ENCODE measurements at regions of chr1 and their contacts with region 1.

Region 1: DNA sequence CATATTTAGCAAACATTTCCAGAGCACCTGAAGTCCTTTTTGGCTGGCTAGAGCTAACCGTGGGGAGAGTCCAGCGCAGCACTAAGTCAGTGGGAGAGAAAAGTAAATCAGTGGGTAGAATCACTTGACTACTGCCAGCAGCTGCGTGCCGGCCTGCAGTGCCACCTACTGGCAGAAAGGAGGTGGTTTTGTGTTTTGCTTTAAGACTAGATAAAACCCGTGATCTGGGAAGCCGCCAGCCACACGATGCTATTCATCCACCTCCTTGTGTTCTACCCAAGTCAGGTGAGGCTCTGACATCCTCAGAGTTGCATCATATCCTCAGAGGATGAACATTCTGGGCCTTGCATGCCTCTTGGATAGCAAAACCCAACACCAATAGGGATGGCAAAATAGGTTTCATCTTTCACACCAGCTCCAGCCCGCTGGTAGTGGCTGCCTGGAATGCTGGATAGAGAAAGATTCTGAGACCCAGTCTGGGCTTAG is 14.1 kb upstream of the HEYL start:
- DNase-seq: peak; percentile 84
- ATAC-seq: peak; percentile 77
- H3K4me3 Mint-ChIP-seq: no peak overlapping the region
- H3K27ac Mint-ChIP-seq: no peak overlapping the region
- H3K4me1 Mint-ChIP-seq: peaks cover 15% of the 10 kb centered on the region
- H3K27me3 Mint-ChIP-seq: peaks cover 8% of the 10 kb centered on the region

Region 2: DNA sequence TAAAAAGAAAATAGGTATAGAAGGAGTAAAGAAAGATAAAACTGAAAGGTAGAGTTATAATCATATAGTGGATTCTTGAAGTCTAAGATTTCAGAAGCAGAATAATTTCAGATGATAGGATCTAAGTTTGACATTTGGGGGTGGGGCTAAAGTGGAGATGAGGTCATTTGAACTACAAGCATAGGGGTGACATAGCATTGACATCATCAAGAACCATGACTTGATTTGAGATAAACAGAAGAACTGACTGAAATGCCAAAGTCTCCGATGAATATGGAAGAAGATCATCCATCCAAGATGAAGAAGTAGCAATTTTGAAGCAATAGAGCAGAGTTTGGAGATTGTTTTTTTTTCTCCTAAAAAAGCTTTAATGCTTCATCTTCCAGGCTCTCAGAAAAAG is 326.8 kb before region 1 on chr1:
- CTCF ChIA-PET with region 1: no interaction called
- POLR2A ChIA-PET with region 1: no interaction called
- DNase-seq: no peak
- ATAC-seq: no peak
- H3K4me3 Mint-ChIP-seq: no peak overlapping the region
- H3K27ac Mint-ChIP-seq: peak overlapping the region; percentile 0
- H3K4me1 Mint-ChIP-seq: peaks cover 22% of the 10 kb centered on the region
- H3K27me3 Mint-ChIP-seq: no peaks in the 10 kb centered on the region

Region 3: DNA sequence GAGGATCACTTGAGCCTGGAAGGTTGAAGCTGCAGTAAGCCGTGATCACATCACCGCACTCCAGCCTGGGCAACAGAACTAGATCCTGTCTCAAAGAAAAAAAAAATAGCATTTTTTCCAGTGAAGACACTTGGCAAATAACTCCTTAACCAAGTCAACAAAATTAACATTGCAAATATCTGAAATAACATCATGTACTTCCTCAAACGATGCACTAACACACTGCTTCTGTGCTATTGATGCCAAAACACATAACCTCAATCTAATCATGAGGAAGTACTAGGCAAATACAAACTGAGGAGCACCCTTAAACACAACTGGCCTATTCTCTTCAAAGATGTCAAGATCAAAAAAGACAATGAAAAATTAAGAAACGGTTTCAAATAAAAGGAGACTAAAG is 109.3 kb before region 1 on chr1:
- CTCF ChIA-PET with region 1: no interaction called
- POLR2A ChIA-PET with region 1: no interaction called
- DNase-seq: no peak
- ATAC-seq: no peak
- H3K4me3 Mint-ChIP-seq: no peak overlapping the region
- H3K27ac Mint-ChIP-seq: no peak overlapping the region
- H3K4me1 Mint-ChIP-seq: no peaks in the 10 kb centered on the region
- H3K27me3 Mint-ChIP-seq: no peaks in the 10 kb centered on the region

Region 4: DNA sequence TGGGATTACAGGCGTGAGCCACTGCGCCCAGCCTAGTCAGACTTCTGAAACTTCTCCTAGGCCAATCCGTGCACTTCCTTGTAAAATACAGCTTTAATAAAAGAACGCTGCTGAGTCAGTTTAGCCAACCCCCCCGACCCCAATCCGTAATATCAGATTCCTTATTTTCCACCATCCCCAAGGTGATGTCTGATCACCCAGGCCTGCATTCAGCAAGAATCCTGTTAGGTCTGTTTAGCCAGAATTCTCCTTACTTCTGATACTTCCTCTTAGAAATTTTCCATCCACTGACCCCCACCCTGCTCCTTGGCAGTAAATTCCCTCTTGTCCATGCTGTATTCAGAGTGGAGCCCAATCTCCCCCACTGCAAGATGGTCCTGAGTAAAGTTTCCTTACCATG is 65.5 kb before region 1 on chr1:
- CTCF ChIA-PET with region 1: interaction called, 11 read pairs
- POLR2A ChIA-PET with region 1: no interaction called
- DNase-seq: no peak
- ATAC-seq: no peak
- H3K4me3 Mint-ChIP-seq: no peak overlapping the region
- H3K27ac Mint-ChIP-seq: no peak overlapping the region
- H3K4me1 Mint-ChIP-seq: peaks cover 2% of the 10 kb centered on the region
- H3K27me3 Mint-ChIP-seq: peaks cover 2% of the 10 kb centered on the region

Region 5: DNA sequence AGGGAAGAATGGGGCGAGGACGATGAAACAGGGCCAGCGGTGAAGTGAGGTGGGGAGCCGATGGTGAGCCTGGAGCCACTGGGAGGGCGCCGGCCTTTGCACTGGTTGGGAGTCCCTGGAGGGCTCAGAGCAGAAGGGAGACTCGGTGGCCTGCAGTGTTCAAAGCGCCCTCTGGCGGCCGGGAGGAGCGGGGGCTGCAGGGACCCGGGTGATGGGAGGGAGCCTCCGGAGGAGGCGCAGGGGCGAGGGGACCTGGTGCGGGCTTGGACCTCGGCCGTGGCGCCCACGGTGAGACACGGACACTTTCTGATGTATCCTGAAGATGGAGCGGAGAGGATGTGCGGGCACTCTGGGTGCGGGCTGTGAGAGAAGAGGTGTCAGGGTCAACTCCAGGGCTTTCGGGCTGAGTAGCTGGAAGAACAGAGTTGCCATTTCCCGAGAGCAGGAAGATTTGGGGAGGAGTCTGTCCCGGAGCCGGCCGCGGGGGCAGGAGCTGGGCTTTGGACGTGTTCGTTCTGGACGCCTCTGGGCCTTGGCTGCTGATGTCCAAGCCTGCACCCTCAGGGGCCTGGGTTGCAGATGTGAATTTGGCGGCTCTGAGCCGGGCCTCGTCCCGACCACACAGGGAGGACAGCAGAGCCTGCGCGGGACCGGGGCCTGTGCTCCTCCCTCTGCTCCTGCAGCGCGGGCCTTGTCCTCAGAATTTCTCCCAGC is 43.8 kb before region 1 on chr1:
- CTCF ChIA-PET with region 1: interaction called, 295 read pairs
- POLR2A ChIA-PET with region 1: interaction called, 3 read pairs
- DNase-seq: peak; percentile 72
- ATAC-seq: peak; percentile 90
- H3K4me3 Mint-ChIP-seq: no peak overlapping the region
- H3K27ac Mint-ChIP-seq: no peak overlapping the region
- H3K4me1 Mint-ChIP-seq: peaks cover 8% of the 10 kb centered on the region
- H3K27me3 Mint-ChIP-seq: peaks cover 12% of the 10 kb centered on the region

Region 6: GRCh38 chr1:39672551-39672947 is 19.0 kb after region 1 on chr1:
- CTCF ChIA-PET with region 1: interaction called, 230 read pairs
- POLR2A ChIA-PET with region 1: no interaction called
- DNase-seq: peak; percentile 35
- ATAC-seq: peak; percentile 23
- H3K4me3 Mint-ChIP-seq: peak overlapping the region; percentile 34
- H3K27ac Mint-ChIP-seq: no peak overlapping the region
- H3K4me1 Mint-ChIP-seq: peaks cover 11% of the 10 kb centered on the region
- H3K27me3 Mint-ChIP-seq: peaks cover 33% of the 10 kb centered on the region

Region 7: GRCh38 chr1:39691262-39692151 is 37.9 kb after region 1 on chr1 and contains the start of gene HPCAL4:
- CTCF ChIA-PET with region 1: interaction called, 14 read pairs
- POLR2A ChIA-PET with region 1: no interaction called
- DNase-seq: peak; percentile 93
- ATAC-seq: peak; percentile 98
- H3K4me3 Mint-ChIP-seq: peak within 1 kb of the TSS; percentile 74
- H3K27ac Mint-ChIP-seq: peak within 1 kb of the TSS; percentile 49
- H3K4me1 Mint-ChIP-seq: peaks cover 22% of the 10 kb centered on the region
- H3K27me3 Mint-ChIP-seq: peaks cover 57% of the 10 kb centered on the region
- total RNA-seq, gene HPCAL4: 0.47 to 0.55 TPM

Region 8: DNA sequence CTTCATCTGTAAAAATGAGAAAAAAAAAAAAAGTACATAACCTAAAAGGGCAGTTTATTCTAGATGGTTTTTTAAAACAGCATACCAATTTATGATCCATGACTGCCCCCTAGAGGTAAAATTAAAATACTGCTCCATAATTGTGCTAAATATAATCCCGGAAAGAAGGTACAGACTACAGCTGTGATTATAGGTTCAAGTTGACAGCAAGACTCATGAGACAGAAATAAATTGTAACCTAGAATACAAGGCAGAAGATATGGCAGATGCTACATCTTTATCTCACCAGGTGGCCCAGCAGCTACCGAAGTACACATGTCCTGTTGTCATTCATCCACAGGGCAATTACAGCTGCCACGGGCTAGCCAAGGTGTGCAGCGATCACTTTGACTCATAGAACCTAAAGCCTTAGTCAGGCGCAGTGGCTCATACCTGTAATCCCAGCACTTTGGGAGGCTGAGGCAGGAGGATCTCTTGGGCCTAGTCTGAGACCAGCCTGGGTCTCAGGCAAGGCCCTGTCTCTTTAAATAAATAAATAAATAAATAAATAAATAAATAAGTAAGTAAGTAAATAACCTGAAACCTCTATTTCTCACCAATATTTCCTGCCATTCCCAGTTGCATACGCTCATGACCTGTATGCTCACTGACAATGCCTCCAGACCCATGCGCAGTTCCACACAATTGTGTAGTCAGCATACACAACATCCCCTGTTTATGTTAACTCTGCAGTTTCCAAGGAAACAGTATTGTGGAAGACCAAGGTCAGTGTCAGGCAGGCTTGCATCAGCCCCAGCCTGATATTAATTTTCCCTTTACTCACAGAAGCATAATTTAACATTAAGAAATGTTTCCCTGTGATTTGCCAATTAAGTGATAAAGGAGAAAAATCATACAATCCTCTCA is 66.8 kb after region 1 on chr1:
- CTCF ChIA-PET with region 1: interaction called, 20 read pairs
- POLR2A ChIA-PET with region 1: no interaction called
- DNase-seq: no peak
- ATAC-seq: peak; percentile 67
- H3K4me3 Mint-ChIP-seq: no peak overlapping the region
- H3K27ac Mint-ChIP-seq: no peak overlapping the region
- H3K4me1 Mint-ChIP-seq: no peaks in the 10 kb centered on the region
- H3K27me3 Mint-ChIP-seq: peaks cover 53% of the 10 kb centered on the region

Region 9: GRCh38 chr1:39835110-39835509 is 181.5 kb after region 1 on chr1:
- CTCF ChIA-PET with region 1: no interaction called
- POLR2A ChIA-PET with region 1: no interaction called
- DNase-seq: no peak
- ATAC-seq: no peak
- H3K4me3 Mint-ChIP-seq: no peak overlapping the region
- H3K27ac Mint-ChIP-seq: no peak overlapping the region
- H3K4me1 Mint-ChIP-seq: no peaks in the 10 kb centered on the region
- H3K27me3 Mint-ChIP-seq: peaks cover 4% of the 10 kb centered on the region

Region 10: DNA sequence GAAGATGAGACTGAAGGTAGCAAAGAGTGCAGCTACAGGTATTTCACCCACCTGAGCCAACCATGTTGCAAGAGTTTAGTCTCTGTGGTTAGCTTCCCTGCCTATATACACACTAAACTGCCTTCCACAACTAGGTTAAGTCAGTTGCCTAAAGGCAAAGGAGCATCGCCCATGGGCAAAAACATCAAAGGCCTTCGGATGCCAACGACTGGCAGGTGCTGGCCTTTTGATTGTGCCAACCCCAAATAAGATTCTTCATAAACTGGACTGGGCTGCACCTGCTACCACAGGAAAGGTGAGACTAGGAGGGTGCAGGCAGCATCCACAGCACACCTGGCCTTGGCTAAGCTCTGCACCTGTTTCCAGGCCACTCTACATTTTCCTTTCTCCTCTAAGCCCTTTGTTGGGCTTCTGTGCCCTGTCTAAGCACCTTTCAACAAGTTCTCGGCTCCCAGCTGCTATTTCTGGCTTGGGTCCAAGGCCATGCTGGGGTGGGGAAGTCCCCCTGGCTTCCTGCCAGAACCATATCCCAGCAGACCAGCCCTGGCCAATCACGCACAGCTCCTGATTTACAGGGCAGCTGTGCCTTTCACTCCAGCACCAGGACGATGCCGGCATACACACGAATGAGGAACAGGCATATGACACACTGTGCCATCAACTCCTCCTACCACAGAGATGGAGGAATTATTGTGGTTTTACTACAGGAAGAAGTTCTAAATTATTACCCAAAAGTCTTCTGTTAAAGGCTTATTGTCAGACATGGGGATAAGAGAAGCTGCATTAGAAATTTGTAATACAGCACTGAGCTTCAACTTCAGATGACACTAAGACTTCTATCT is 191.9 kb after region 1 on chr1:
- CTCF ChIA-PET with region 1: interaction called, 12 read pairs
- POLR2A ChIA-PET with region 1: no interaction called
- DNase-seq: peak; percentile 63
- ATAC-seq: peak; percentile 86
- H3K4me3 Mint-ChIP-seq: no peak overlapping the region
- H3K27ac Mint-ChIP-seq: peak overlapping the region; percentile 73
- H3K4me1 Mint-ChIP-seq: peaks cover 38% of the 10 kb centered on the region
- H3K27me3 Mint-ChIP-seq: no peaks in the 10 kb centered on the region